ENCODE measurements at regions of chr6 and their contacts with region 1.

Region 1: DNA sequence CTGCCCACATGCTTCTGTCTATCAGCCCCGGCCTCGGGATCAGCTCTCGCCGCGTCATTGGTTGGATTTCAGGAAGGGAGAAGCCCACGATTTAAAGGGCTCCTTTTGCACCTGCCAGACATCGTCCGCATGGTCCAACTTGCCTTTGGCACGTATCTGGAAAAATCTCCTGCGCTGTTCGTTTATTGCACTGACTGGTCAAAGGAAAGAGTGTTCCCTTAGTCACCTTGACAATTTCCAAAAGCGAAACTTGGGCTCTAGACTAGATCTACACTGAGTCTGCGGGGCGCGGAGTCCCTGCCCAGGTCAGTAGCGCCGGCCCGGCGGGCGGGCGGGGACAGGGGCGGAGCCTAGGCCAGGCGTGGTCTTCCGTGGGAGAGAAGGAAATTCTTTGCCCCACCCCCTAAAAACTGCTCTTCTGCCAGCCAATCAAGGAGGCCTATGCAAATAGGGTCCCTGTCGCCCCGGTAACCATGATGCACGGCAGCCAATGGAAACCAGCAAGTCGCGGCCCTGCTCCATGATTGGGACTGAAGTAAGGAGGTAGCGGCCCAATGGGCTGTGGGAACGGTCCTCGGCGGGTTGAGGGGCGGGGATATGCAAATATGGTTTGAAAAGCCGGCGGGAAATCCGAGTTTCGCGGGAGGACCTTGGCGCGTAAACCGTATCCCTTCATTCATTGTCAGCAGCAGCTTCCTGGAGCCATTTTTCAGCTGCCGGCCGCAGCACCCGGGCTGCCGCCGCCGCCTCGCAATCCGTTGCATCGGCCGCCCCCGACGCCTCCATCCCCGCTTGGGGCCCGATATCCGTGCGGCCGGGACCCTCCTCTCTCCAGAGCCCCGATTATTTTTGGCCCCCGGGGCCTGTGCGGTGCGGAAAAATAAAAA is at the start of gene E2F3:
- DNase-seq: peak; percentile 93
- ATAC-seq: peak; percentile 81
- H3K4me3 Mint-ChIP-seq: peak within 1 kb of the TSS; percentile 96
- H3K27ac Mint-ChIP-seq: peak within 1 kb of the TSS; percentile 79
- H3K4me1 Mint-ChIP-seq: peaks cover 25% of the 10 kb centered on the region
- H3K27me3 Mint-ChIP-seq: no peaks in the 10 kb centered on the region
- CTCF ChIP-seq: no peak
- total RNA-seq, gene E2F3: 14.0 and 15.6 TPM in 2 replicates

Region 2: GRCh38 chr6:20212392-20213217 is 188.8 kb before region 1 on chr6 and contains the start of gene MBOAT1:
- CTCF ChIA-PET with region 1: interaction called, 4 read pairs
- POLR2A ChIA-PET with region 1: interaction called, 3 read pairs
- intact Hi-C with region 1: loop called (anchors 1 kb)
- DNase-seq: peak; percentile 43
- ATAC-seq: peak; percentile 73
- H3K4me3 Mint-ChIP-seq: peak within 1 kb of the TSS; percentile 90
- H3K27ac Mint-ChIP-seq: peak within 1 kb of the TSS; percentile 85
- H3K4me1 Mint-ChIP-seq: peaks cover 22% of the 10 kb centered on the region
- H3K27me3 Mint-ChIP-seq: peaks cover 3% of the 10 kb centered on the region
- CTCF ChIP-seq: no peak
- total RNA-seq, gene MBOAT1: 3.5 and 3.7 TPM in 2 replicates

Region 3: DNA sequence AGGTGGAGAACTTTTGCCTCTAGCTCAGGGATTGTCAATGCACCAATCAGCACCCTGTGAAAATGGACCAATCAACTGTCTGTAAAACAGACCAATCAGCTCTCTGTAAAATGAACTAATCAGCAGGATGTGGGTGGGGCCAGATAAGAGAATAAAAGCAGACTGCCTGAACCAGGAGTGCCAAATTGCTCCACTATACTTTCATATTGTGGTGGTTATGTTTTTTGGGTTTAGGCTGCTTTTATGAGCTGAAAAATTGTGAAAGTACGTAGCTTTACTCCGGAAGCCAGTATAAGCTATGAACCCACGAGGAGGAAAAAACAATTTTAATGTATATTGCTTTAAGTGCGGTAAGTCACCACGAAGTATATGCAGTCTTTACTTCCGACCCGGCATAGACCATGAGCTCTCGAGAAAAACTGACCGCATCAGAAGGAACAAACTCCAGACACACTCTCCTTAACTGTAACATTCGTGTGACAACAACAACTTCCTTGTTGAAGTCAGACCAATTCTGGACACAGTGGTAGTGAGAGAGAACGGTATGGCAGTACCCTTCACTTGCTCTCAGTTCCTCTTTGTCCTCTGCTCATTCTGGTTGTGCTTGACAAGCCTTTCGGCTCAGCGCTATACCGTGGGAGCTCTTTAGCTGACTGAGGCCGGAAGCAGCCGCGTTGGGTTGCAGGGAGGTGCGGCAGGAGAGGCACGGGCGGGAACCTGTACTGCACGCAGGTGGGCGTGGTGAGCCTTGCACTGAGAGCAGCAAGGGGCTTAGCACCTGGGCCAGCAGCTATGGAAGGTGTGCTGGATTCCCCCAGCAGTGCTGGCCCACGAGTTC is 81.7 kb before region 1 on chr6:
- CTCF ChIA-PET with region 1: interaction called, 15 read pairs
- POLR2A ChIA-PET with region 1: interaction called, 52 read pairs
- intact Hi-C with region 1: loop called (anchors 1 kb)
- DNase-seq: peak; percentile 71
- ATAC-seq: peak; percentile 96
- H3K4me3 Mint-ChIP-seq: peak overlapping the region; percentile 81
- H3K27ac Mint-ChIP-seq: peak overlapping the region; percentile 96
- H3K4me1 Mint-ChIP-seq: peaks cover 15% of the 10 kb centered on the region
- H3K27me3 Mint-ChIP-seq: no peaks in the 10 kb centered on the region
- CTCF ChIP-seq: no peak

Region 4: DNA sequence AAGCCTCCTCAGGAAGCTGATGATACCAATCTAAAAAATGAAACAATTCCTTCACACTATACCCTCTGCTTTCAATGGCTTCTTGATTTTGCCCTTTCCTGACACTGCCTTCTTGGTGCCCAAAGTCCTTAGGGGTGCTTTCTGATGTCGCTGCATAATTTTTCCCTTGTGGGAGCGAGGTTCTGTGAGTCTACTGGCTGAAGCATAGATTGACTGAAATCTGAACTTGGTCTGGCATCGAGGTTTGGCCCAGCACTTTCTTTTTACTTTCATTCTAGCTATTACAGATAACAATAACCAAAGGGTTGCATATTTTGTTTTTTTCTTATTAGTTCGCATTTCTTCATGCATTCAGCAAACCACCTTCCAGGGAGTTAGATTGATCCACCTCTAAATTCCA is 66.0 kb after region 1 on chr6:
- CTCF ChIA-PET with region 1: interaction called, 4 read pairs
- POLR2A ChIA-PET with region 1: interaction called, 4 read pairs
- intact Hi-C with region 1: loop called (anchors 1 kb)
- DNase-seq: no peak
- ATAC-seq: no peak
- H3K4me3 Mint-ChIP-seq: no peak overlapping the region
- H3K27ac Mint-ChIP-seq: no peak overlapping the region
- H3K4me1 Mint-ChIP-seq: peaks cover 25% of the 10 kb centered on the region
- H3K27me3 Mint-ChIP-seq: no peaks in the 10 kb centered on the region
- CTCF ChIP-seq: no peak

Region 5: GRCh38 chr6:20534295-20535262 is 133.1 kb after region 1 on chr6 and contains the start of gene CDKAL1:
- CTCF ChIA-PET with region 1: interaction called, 16 read pairs
- POLR2A ChIA-PET with region 1: interaction called, 7 read pairs
- intact Hi-C with region 1: loop called (anchors 1 kb)
- DNase-seq: peak; percentile 77
- ATAC-seq: peak; percentile 96
- H3K4me3 Mint-ChIP-seq: peak within 1 kb of the TSS; percentile 98
- H3K27ac Mint-ChIP-seq: peak within 1 kb of the TSS; percentile 96
- H3K4me1 Mint-ChIP-seq: peaks cover 26% of the 10 kb centered on the region
- H3K27me3 Mint-ChIP-seq: no peaks in the 10 kb centered on the region
- CTCF ChIP-seq: no peak
- total RNA-seq, gene CDKAL1: 28.7 and 31.9 TPM in 2 replicates

Region 6: DNA sequence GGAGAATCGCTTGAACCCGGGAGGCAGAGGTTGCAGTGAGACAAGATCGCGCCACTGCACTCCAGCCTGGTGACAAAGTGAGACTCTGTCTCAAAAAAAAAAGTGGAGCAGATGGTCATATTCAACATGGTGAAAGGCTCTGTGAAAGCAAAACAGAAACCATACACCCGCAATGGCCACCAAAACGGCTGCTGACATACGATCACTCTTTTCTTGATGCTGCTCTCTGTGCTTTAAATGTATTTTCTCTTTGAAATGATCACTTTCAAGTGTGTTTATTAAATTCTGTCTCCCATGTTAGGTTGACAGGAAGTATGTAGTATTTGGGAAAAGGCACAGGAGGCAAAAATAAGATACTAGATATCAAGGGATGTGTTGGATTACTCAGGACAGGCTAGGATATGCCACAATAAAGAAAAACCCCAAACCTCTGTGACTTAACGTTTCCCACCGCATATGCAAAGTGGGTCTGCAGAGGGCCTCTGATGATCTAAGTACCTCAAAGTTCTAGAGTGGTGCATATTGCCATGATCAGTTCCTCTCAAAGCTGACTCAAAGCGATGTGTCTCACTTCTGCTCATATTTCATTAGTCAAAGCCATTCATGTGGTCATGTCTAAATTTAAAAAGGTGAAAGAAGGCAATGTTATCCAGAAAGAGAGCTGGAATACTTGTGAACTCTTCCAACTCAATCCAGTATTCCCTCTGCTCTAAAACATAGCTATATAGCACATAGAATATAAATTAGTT is 1037.0 kb after region 1 on chr6:
- CTCF ChIA-PET with region 1: no interaction called
- POLR2A ChIA-PET with region 1: no interaction called
- intact Hi-C with region 1: loop called (anchors 1 kb)
- DNase-seq: no peak
- ATAC-seq: peak; percentile 89
- H3K4me3 Mint-ChIP-seq: peak overlapping the region; percentile 72
- H3K27ac Mint-ChIP-seq: peak overlapping the region; percentile 87
- H3K4me1 Mint-ChIP-seq: peaks cover 20% of the 10 kb centered on the region
- H3K27me3 Mint-ChIP-seq: no peaks in the 10 kb centered on the region
- CTCF ChIP-seq: no peak

Measured in activated B cell treated with CpG ODN at 0.5 μM for 24 hours (primary cell).